BJ (cell line): ENCODE measurements at regions of chr7 and their contacts with region 1.

Region 1: GRCh38 chr7:144174613-144175012 is 8.7 kb upstream of the CTAGE4 start:
- DNase-seq: no peak
- H3K4me3 ChIP-seq: no peak overlapping the region
- H3K27me3 ChIP-seq: no peaks in the 10 kb centered on the region
- CTCF ChIP-seq: no peak

Region 2: GRCh38 chr7:144391823-144392255 is 217.2 kb after region 1 on chr7:
- CTCF ChIA-PET with region 1: interaction called, 10 read pairs
- POLR2A ChIA-PET with region 1: no interaction called
- DNase-seq: no peak
- H3K4me3 ChIP-seq: no peak overlapping the region
- H3K27me3 ChIP-seq: no peaks in the 10 kb centered on the region
- CTCF ChIP-seq: peak; percentile 69